Calu3 (cell line): ENCODE measurements at regions of chr18 and their contacts with region 1.

Region 1: GRCh38 chr18:2655178-2655953 is at the start of gene SMCHD1:
- DNase-seq: peak; percentile 89
- H3K4me3 Mint-ChIP-seq: peak within 1 kb of the TSS; percentile 92
- H3K27ac Mint-ChIP-seq: peak within 1 kb of the TSS; percentile 95
- H3K4me1 Mint-ChIP-seq: peaks cover 9% of the 10 kb centered on the region
- H3K27me3 Mint-ChIP-seq: no peaks in the 10 kb centered on the region
- CTCF ChIP-seq: no peak
- total RNA-seq, gene SMCHD1: 66.1 and 68.3 TPM in 2 replicates

Region 2: GRCh38 chr18:2571200-2572143 is 83.9 kb before region 1 on chr18 and contains the starts of genes METTL4 and NDC80:
- CTCF ChIA-PET with region 1: interaction called, 4 read pairs
- intact Hi-C with region 1: loop called (anchors 5 kb)
- DNase-seq: peak; percentile 85
- H3K4me3 Mint-ChIP-seq: peak within 1 kb of the TSS; percentile 91
- H3K27ac Mint-ChIP-seq: peak within 1 kb of the TSS; percentile 84
- H3K4me1 Mint-ChIP-seq: peaks cover 48% of the 10 kb centered on the region
- H3K27me3 Mint-ChIP-seq: no peaks in the 10 kb centered on the region
- CTCF ChIP-seq: no peak
- total RNA-seq, gene METTL4: 17.2 and 20.3 TPM in 2 replicates
- total RNA-seq, gene NDC80: 49.5 and 56.0 TPM in 2 replicates

Region 3: DNA sequence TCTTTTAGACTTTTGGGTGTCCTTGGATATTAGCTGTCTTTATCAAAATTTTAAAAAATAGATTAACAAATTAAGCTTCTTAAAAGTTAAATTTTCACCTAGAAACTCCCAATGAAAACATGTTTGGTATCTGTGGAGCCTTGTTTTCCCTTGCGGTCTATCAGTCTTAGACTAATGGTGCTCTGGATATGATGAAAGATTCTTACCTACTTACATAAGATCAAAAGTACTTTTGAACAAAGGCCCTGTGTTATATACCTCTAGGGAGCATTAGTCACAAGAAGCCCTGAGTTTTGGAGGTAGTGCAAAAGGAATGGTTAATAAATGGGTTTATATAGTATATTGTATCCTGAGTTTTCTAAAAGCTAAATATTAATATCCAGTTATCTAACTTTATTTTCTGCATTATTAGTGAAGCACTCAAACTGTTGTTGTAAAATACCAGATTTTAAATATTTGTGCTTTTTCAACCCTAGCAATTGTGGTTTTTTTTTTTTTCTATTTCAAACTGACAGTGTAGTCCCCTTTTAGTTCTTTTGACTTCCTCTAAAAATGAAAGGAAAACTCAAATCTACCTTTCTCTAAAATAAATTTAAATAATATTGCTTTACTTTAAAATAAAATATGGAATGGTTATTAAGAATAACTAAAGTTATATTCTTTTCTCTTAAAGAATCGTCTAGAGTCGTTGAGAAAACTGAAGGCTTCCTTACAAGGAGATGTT is 65.9 kb before region 1 on chr18:
- CTCF ChIA-PET with region 1: interaction called, 4 read pairs
- intact Hi-C with region 1: loop called (anchors 5 kb)
- DNase-seq: no peak
- H3K4me3 Mint-ChIP-seq: peak overlapping the region; percentile 51
- H3K27ac Mint-ChIP-seq: peak overlapping the region; percentile 99
- H3K4me1 Mint-ChIP-seq: peaks cover 42% of the 10 kb centered on the region
- H3K27me3 Mint-ChIP-seq: no peaks in the 10 kb centered on the region
- CTCF ChIP-seq: no peak

Region 4: GRCh38 chr18:2741651-2742050 is 86.3 kb after region 1 on chr18:
- CTCF ChIA-PET with region 1: no interaction called
- intact Hi-C with region 1: no loop called
- DNase-seq: no peak
- H3K4me3 Mint-ChIP-seq: no peak overlapping the region
- H3K27ac Mint-ChIP-seq: no peak overlapping the region
- H3K4me1 Mint-ChIP-seq: no peaks in the 10 kb centered on the region
- H3K27me3 Mint-ChIP-seq: no peaks in the 10 kb centered on the region
- CTCF ChIP-seq: no peak